ENCODE measurements at regions of chr4 and their contacts with region 1.

Region 1: DNA sequence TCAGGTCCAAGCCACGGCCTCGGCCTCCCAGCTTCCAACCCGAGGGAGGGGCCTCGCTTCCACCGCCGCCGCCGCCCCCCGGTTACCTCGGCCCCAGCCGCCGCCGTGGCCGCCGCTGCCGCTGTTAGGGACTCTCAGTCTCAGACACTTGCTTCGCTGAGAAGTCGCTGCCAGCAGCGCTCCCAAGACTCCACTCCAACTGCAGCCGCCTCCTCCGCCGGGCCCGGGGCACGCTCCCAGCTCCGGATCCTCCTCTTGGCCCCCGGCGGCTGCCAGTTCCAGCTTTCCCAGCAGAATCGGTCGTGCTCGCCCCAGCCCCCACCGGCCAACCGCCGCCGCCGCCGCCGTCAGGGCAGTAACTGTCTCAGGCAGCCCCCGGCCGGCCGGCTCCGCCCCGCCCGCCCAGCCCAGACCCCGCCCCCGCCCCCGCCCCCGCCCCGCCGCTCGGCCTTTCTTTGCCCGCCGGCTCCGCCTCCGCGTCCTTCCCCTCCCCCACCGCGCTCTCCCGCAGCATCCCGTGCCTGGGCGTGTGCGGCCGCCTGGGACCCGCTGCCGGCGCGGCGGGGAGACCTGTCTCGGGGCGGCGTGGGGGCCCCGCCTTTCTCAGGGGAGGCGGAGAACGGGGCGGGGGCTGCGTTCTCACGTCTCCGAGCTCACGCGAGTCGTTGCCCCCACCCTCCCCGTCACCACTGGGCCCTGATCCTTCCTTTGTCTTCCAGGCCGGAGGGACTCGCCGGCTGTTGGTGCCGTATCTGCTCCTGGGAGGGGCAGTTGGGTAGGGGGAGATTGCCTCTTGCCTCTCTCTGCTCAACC is at the start of gene ANKRD50:
- DNase-seq: peak; percentile 93
- H3K4me3 Mint-ChIP-seq: no peak within 1 kb of the TSS
- H3K27ac Mint-ChIP-seq: no peak within 1 kb of the TSS
- H3K4me1 Mint-ChIP-seq: peaks cover 18% of the 10 kb centered on the region
- H3K27me3 Mint-ChIP-seq: no peaks in the 10 kb centered on the region
- CTCF ChIP-seq: no peak
- total RNA-seq, gene ANKRD50: 44.1 and 47.6 TPM in 2 replicates

Region 2: DNA sequence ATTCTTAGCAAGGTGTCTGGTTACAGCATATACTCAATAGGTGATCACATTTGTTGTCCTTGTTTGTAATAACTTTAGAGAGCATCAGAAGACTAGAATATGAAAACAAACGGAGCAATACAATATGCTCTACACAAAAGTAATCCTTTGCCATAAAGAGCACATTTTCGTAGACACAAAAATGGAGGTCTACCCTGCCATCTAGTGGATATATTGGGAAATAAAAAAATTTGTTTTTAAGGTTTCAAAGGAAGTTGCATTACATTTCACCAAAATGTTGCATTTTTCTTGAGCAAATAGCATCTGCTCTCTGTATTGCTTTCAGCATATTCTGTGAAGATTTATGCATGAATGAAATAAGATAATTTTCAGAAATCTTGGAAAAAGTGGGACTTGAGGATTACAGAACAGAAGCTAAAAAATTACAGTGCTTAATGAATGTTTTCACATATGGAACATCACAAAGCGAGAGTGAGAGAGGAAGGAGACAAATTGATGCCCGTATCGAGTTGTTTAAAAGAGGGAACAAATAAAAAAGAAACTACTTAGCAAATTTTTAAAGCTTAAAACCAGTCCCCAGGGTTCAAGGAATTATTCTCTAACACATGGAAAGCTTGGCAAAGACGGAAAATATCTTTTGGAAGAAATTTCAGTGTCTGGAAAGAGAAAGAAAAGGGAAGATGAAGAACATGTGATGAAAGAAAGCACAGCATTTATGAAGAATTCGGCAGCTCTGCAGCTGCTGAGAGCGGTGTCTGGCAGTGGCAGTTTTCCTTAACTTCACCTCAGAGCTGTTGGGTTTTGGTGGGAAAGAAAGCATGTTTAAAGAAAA is 390.1 kb before region 1 on chr4:
- CTCF ChIA-PET with region 1: no interaction called
- POLR2A ChIA-PET with region 1: no interaction called
- intact Hi-C with region 1: no loop called
- DNase-seq: peak; percentile 59
- H3K4me3 Mint-ChIP-seq: no peak overlapping the region
- H3K27ac Mint-ChIP-seq: no peak overlapping the region
- H3K4me1 Mint-ChIP-seq: no peaks in the 10 kb centered on the region
- H3K27me3 Mint-ChIP-seq: no peaks in the 10 kb centered on the region
- CTCF ChIP-seq: peak; percentile 52

Region 3: GRCh38 chr4:124334119-124334518 is 378.5 kb before region 1 on chr4:
- CTCF ChIA-PET with region 1: interaction called, 3 read pairs
- POLR2A ChIA-PET with region 1: interaction called, 15 read pairs
- intact Hi-C with region 1: loop called (anchors 1 kb)
- DNase-seq: peak; percentile 81
- H3K4me3 Mint-ChIP-seq: peak overlapping the region; percentile 23
- H3K27ac Mint-ChIP-seq: no peak overlapping the region
- H3K4me1 Mint-ChIP-seq: peaks cover 5% of the 10 kb centered on the region
- H3K27me3 Mint-ChIP-seq: no peaks in the 10 kb centered on the region
- CTCF ChIP-seq: peak; percentile 64

Region 4: DNA sequence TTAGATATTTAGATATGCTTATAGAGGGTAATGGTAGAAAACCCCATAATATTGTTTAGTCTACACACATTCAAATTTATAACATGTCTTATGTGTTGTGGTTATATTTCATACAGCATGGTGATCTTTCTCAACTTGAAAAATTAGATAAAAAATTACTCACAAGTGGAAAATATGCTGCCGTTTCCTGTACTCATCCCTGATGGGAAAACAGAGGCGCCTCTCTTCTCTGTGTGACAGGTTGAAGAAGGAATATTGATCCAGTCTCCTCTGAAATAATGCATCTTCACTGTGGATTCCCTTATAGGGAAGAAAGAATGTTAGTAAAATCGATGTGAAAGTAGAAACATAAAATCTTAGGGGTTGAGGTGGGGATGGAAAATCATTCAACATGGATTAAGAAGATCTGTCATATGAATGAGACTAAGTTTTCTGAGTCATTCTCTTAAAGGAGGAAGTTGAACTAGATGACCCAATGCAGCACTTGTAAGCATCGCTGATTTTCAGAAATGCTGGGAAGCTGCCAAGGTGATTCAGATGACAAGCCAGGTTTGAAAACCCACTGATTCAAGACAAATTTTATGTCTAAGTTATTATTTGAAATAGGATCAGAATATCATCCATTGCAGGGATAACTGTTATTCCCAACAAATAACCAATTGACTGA is 70.7 kb before region 1 on chr4:
- CTCF ChIA-PET with region 1: interaction called, 3 read pairs
- POLR2A ChIA-PET with region 1: interaction called, 6 read pairs
- intact Hi-C with region 1: loop called (anchors 5 kb)
- DNase-seq: peak; percentile 94
- H3K4me3 Mint-ChIP-seq: peak overlapping the region; percentile 52
- H3K27ac Mint-ChIP-seq: peak overlapping the region; percentile 71
- H3K4me1 Mint-ChIP-seq: peaks cover 28% of the 10 kb centered on the region
- H3K27me3 Mint-ChIP-seq: no peaks in the 10 kb centered on the region
- CTCF ChIP-seq: no peak

Region 5: GRCh38 chr4:124940387-124940786 is 227.8 kb after region 1 on chr4:
- CTCF ChIA-PET with region 1: no interaction called
- POLR2A ChIA-PET with region 1: interaction called, 12 read pairs
- intact Hi-C with region 1: loop called (anchors 1 kb)
- DNase-seq: peak; percentile 90
- H3K4me3 Mint-ChIP-seq: no peak overlapping the region
- H3K27ac Mint-ChIP-seq: peak overlapping the region; percentile 90
- H3K4me1 Mint-ChIP-seq: peaks cover 50% of the 10 kb centered on the region
- H3K27me3 Mint-ChIP-seq: no peaks in the 10 kb centered on the region
- CTCF ChIP-seq: no peak

Region 6: DNA sequence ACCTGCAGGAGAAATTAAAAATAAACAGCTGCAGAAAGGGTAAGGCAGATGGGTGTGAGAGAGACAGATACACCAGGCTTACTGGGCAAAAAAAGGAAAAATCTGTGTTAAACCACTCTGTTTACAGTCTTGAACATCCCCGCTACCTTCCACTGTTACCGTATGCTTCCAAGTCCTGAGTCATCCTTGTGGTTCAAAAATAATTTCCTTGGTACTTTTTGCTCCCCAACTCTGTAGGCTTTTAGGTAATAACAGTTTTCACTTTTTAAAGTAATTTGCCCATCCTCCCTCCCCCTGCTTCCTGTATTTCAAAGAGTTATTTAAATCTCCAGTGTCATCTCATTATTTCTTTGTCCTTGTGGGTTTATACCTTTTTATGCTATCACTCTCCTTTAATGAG is 392.0 kb after region 1 on chr4:
- CTCF ChIA-PET with region 1: no interaction called
- POLR2A ChIA-PET with region 1: interaction called, 3 read pairs
- intact Hi-C with region 1: loop called (anchors 2 kb)
- DNase-seq: peak; percentile 36
- H3K4me3 Mint-ChIP-seq: no peak overlapping the region
- H3K27ac Mint-ChIP-seq: no peak overlapping the region
- H3K4me1 Mint-ChIP-seq: peaks cover 32% of the 10 kb centered on the region
- H3K27me3 Mint-ChIP-seq: no peaks in the 10 kb centered on the region
- CTCF ChIP-seq: no peak

Region 7: GRCh38 chr4:125244848-125245450 is 532.4 kb after region 1 on chr4:
- CTCF ChIA-PET with region 1: no interaction called
- POLR2A ChIA-PET with region 1: interaction called, 3 read pairs
- intact Hi-C with region 1: loop called (anchors 1 kb)
- DNase-seq: peak; percentile 27
- H3K4me3 Mint-ChIP-seq: no peak overlapping the region
- H3K27ac Mint-ChIP-seq: no peak overlapping the region
- H3K4me1 Mint-ChIP-seq: peaks cover 5% of the 10 kb centered on the region
- H3K27me3 Mint-ChIP-seq: no peaks in the 10 kb centered on the region
- CTCF ChIP-seq: peak; percentile 44